IMR-90 (cell line): ENCODE measurements at regions of chr17 and their contacts with region 1.

Region 1: GRCh38 chr17:9021158-9021991 is at the start of gene NTN1:
- DNase-seq: peak; percentile 13
- ATAC-seq: peak; percentile 75
- H3K4me3 ChIP-seq: peak within 1 kb of the TSS; percentile 42
- H3K27ac ChIP-seq: no peak within 1 kb of the TSS
- H3K4me1 ChIP-seq: no peaks in the 10 kb centered on the region
- H3K27me3 ChIP-seq: peaks cover 45% of the 10 kb centered on the region
- CTCF ChIP-seq: no peak
- POLR2A ChIP-seq: no peak
- RAD21 ChIP-seq: no peak
- total RNA-seq, gene NTN1: under 0.01 TPM in 1 of 2 replicates, not detected in the other

Region 2: GRCh38 chr17:8857919-8858318 is 163.5 kb before region 1 on chr17:
- CTCF ChIA-PET with region 1: no interaction called
- POLR2A ChIA-PET with region 1: no interaction called
- dilution Hi-C with region 1: no loop called
- in situ Hi-C with region 1: no loop called
- intact Hi-C with region 1: no loop called
- DNase-seq: peak; percentile 42
- ATAC-seq: no peak
- H3K4me3 ChIP-seq: no peak overlapping the region
- H3K27ac ChIP-seq: no peak overlapping the region
- H3K4me1 ChIP-seq: no peaks in the 10 kb centered on the region
- H3K27me3 ChIP-seq: no peaks in the 10 kb centered on the region
- CTCF ChIP-seq: no peak
- POLR2A ChIP-seq: no peak
- RAD21 ChIP-seq: no peak

Region 3: GRCh38 chr17:9291912-9292560 is 270.7 kb after region 1 on chr17:
- CTCF ChIA-PET with region 1: interaction called, 4 read pairs
- POLR2A ChIA-PET with region 1: no interaction called
- dilution Hi-C with region 1: no loop called
- in situ Hi-C with region 1: no loop called
- intact Hi-C with region 1: loop called (anchors 10 kb)
- DNase-seq: peak; percentile 25
- ATAC-seq: peak; percentile 95
- H3K4me3 ChIP-seq: no peak overlapping the region
- H3K27ac ChIP-seq: no peak overlapping the region
- H3K4me1 ChIP-seq: no peaks in the 10 kb centered on the region; the same call in 1 of the 2 replicates
- H3K27me3 ChIP-seq: no peaks in the 10 kb centered on the region
- CTCF ChIP-seq: peak; percentile 45
- POLR2A ChIP-seq: no peak
- RAD21 ChIP-seq: peak; percentile 58

Region 4: DNA sequence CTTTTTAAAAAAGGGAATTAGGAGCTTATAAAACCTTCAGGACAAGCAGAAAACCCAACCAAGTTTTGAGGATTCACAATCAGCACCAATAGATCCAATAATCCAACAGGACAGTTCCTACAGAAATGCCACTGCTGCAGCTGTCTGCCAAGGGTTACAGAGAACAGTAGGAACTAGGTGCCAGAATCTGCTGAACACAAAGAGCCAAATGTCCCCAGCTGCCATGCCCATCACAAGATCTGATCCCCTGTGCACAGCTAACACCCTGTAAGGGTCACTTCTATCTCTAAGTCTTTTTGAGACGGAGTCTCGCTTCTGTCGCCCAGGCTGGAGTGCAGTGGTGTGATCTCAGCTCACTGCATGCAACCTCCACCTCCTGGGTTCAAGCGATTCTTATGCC is 292.0 kb after region 1 on chr17:
- CTCF ChIA-PET with region 1: no interaction called
- POLR2A ChIA-PET with region 1: no interaction called
- dilution Hi-C with region 1: no loop called
- in situ Hi-C with region 1: no loop called
- intact Hi-C with region 1: no loop called
- DNase-seq: no peak
- ATAC-seq: no peak
- H3K4me3 ChIP-seq: no peak overlapping the region
- H3K27ac ChIP-seq: no peak overlapping the region
- H3K4me1 ChIP-seq: no peaks in the 10 kb centered on the region
- H3K27me3 ChIP-seq: no peaks in the 10 kb centered on the region
- CTCF ChIP-seq: no peak
- POLR2A ChIP-seq: no peak
- RAD21 ChIP-seq: no peak

Region 5: GRCh38 chr17:9875441-9875840 is 854.1 kb after region 1 on chr17:
- CTCF ChIA-PET with region 1: no interaction called
- POLR2A ChIA-PET with region 1: no interaction called
- dilution Hi-C with region 1: no loop called
- in situ Hi-C with region 1: no loop called
- intact Hi-C with region 1: no loop called
- DNase-seq: peak; percentile 61
- ATAC-seq: peak; percentile 90
- H3K4me3 ChIP-seq: no peak overlapping the region
- H3K27ac ChIP-seq: no peak overlapping the region
- H3K4me1 ChIP-seq: no peaks in the 10 kb centered on the region; the same call in 1 of the 2 replicates
- H3K27me3 ChIP-seq: no peaks in the 10 kb centered on the region
- CTCF ChIP-seq: no peak
- POLR2A ChIP-seq: no peak
- RAD21 ChIP-seq: no peak